Ascending aorta (tissue), 2 donors: ENCODE measurements at regions of chr17 and their contacts with region 1.

Region 1: GRCh38 chr17:78883164-78884122 is 19.6 kb downstream of the CEP295NL start:
- DNase-seq: peak; percentile 77 to 94
- H3K4me3 ChIP-seq: peak overlapping the region; percentile 33 to 59
- H3K27ac ChIP-seq: peak overlapping the region; percentile 90 to 97
- H3K4me1 ChIP-seq: peaks cover 24 to 58% of the 10 kb centered on the region in 2 donors
- H3K27me3 ChIP-seq: no peaks in the 10 kb centered on the region
- CTCF ChIP-seq: peak in 1 of 3 experiments; percentile 9

Region 2: DNA sequence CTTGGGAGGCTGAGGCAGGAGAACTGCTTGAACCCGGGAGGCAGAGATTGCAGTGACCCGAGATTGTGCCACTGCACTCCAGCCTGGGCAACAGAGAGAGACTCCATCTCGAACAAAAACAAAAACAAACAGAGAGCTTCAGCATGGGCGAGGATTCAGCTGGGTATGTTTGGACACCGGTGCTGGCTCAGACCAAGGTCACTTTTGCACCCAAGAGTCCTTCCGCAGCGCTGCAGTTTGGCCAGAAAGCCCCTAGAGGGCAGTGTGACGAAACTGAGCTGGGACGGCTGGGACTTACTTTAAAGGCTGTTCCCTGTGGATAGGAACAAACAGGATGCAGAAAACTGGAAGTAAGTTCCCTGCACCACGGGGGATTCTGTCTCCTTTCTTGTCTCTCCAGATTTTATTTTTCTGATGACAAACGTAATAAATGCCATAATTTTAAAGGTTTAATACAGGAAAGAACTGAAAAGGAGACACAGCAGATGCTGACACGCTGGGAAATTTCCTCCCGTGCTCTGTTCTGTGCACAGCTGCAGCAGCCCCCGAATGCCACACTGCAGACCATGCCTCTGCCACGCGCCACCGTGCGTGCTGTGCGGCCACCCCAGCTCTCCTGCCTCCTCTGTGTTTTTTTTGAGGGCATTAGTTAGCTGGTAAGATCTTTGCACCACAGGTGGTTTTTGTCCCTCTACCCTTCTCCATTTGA is 17.6 kb before region 1 on chr17:
- intact Hi-C with region 1: loop called (anchors 1 kb)
- DNase-seq: peak in 1 of 2 donors; percentile 90
- H3K4me3 ChIP-seq: no peak overlapping the region
- H3K27ac ChIP-seq: peak overlapping the region; percentile 31 to 50
- H3K4me1 ChIP-seq: peaks cover 5 to 39% of the 10 kb centered on the region in 2 donors
- H3K27me3 ChIP-seq: no peaks in the 10 kb centered on the region
- CTCF ChIP-seq: peak; percentile 89 to 96 (median 94)

Region 3: DNA sequence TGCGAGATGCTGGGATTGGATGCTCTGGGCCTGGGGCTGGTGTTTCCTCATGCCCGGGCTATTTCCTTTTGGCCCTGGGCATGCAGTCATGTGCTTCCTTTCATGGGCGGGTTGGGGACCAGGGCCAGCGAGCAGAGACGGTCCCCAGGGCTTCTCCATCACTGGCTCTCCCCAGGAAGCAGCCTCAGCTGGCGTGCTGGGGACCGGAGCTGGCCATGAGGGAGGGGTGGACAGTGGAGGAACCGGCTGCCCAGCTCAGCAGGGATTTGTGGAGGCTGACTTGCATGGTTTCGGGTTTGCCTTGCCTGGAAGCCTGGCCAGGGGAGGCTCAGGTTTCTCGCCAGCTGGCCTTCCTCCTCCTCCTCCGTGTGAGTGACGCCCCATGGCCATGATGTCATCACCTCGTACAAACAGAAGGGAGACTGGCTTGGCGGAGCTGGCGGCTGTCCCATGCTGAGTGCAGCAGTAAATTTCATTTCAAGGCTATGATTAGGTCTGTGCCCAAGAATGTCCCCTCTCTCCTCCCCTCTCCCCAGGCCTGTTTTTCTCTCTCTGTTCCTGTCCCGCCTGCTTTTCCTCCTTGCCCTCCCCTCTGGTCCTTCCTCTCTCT is 50.6 kb after region 1 on chr17:
- intact Hi-C with region 1: loop called (anchors 1 kb)
- DNase-seq: peak; percentile 95 to 99
- H3K4me3 ChIP-seq: peak overlapping the region; percentile 17 to 38
- H3K27ac ChIP-seq: peak overlapping the region; percentile 88 to 98
- H3K4me1 ChIP-seq: peaks cover 15 to 40% of the 10 kb centered on the region in 2 donors
- H3K27me3 ChIP-seq: no peaks in the 10 kb centered on the region
- CTCF ChIP-seq: no peak

Region 4: DNA sequence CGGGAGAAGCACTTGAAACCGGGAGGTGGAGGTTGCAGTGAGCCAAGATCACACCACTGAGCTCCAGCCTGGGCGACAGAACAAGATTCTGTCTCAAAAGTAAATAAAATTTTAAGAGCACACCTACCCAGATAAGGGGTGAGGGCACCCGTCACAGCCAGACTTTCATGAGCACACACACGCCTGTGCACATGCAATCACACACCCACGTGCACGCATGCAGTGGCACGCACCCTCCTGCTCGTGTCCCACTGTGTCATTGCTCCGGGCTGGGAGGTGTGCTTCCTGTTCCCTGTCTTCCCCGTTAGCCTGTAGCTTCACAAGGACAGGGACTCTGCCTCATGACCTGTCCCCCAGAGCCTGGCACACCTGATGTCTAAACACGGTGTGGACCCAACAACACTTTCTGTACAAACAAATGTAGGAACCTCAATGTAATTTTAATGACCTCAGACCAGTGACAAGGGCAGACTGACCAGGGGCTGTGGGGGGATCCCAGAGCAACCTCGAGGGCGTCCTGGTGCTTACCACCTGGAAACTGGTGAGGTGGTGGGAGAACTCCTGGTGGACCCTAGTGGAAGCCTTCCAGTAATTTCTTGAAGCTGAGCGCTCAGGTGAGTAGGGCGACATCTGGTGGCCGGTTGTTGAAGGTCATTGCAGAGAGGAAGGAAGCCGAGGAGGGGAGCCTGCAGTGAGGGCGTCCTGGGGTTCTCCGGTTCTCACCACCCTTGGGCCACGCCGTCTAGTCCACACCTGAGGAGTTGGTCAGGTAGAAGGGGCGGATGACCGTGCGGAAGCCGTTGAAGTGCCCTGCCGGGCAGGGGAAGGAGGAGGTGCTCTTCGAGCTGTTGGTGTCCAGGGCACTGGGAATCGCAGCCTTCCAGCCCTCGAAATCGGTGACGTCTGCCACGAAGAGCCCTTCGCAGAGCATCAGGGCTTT is 87.7 kb after region 1 on chr17:
- intact Hi-C with region 1: loop called (anchors 5 kb)
- DNase-seq: peak; percentile 28 to 90
- H3K4me3 ChIP-seq: peak overlapping the region in 1 of 2 donors; percentile 10
- H3K27ac ChIP-seq: peak overlapping the region in 1 of 2 donors; percentile 58
- H3K4me1 ChIP-seq: peaks cover 7 to 8% of the 10 kb centered on the region in 2 donors
- H3K27me3 ChIP-seq: no peaks in the 10 kb centered on the region
- CTCF ChIP-seq: peak; percentile 86 to 93 (median 92)